ENCODE measurements at regions of chr18 and their contacts with region 1.

Region 1: GRCh38 chr18:6795307-6795706 is 65.8 kb downstream of the ARHGAP28 start:
- DNase-seq: no peak
- H3K4me3 ChIP-seq: no peak overlapping the region
- H3K27ac ChIP-seq: no peak overlapping the region
- H3K4me1 ChIP-seq: no peaks in the 10 kb centered on the region
- H3K27me3 ChIP-seq: no peaks in the 10 kb centered on the region
- CTCF ChIP-seq: no peak

Region 2: DNA sequence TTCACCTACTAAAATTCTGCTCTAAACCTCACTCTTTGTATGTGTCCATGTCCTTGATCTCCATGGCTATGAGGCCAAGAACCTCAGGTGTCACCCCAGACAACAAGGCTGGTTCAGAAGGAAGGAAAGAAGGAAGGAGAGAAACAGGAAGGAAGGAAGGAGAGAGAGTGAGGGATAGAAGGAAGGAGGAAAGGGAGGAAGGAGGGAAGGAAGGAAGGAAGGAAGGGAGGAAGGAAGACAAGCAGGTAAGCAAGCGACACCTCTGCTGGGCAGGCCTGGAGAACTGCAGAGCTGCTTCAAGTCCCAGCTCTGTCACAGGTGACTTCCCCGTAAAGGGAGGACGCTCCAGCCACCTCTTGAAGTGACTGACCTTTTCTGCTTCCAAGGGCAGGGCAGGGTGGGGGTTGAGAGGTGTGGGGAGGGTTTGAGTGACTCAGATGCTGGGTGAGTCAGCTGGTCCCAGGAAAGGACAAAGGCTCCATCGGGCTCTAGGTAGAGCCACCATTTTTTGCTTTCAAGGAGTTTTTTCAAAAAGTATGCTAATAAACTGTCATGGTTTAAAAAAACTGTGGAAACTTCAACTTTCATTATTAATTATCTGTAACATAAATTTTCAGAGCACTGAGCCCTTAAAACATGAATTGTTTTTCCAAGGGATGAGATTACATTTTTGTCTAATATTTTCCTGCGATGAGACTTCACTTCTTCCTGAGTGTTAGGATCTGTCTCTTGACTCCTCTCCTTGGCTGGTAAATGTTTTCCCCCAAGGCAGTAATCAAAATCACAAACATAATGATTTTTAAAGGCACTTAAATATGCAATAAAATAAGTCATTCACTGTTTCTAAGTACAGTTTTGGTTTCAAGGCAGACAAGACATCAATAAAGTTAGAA is 290.5 kb before region 1 on chr18:
- intact Hi-C with region 1: no loop called
- DNase-seq: no peak
- H3K4me3 ChIP-seq: no peak overlapping the region
- H3K27ac ChIP-seq: no peak overlapping the region
- H3K4me1 ChIP-seq: no peaks in the 10 kb centered on the region
- H3K27me3 ChIP-seq: peaks cover 25% of the 10 kb centered on the region
- CTCF ChIP-seq: no peak

Region 3: DNA sequence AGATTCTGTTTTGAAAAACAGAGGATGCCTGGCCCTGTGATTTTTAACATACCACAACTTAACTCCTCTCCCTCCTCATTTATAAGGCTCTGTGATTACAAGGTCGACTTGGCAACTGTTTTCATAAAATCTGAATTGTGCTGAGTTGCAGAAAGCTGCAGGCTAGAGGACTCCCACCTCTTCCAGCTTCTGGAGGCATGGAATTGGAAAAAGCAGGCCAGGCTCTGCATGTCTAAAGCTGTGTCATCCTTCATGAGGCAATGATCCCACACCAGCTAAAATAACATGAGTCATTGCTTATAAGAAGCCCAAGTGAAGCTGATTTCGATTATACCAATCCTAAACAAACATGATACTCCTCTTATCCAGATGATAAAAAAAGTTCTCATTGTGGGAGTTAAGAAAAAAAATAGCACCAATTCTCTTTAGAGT is 54.1 kb before region 1 on chr18:
- intact Hi-C with region 1: loop called (anchors 5 kb)
- DNase-seq: no peak
- H3K4me3 ChIP-seq: no peak overlapping the region
- H3K27ac ChIP-seq: no peak overlapping the region
- H3K4me1 ChIP-seq: peaks cover 10% of the 10 kb centered on the region
- H3K27me3 ChIP-seq: no peaks in the 10 kb centered on the region
- CTCF ChIP-seq: no peak

Measured in left ventricle myocardium inferior (tissue), 1 donor.